ENCODE measurements at regions of chr7 and their contacts with region 1.

Region 1: GRCh38 chr7:23928418-23928775 is 218.4 kb downstream of the STK31 start:
- DNase-seq: no peak
- H3K4me3 ChIP-seq: no peak overlapping the region
- H3K27ac ChIP-seq: no peak overlapping the region
- H3K4me1 ChIP-seq: no peaks in the 10 kb centered on the region
- CTCF ChIP-seq: no peak

Region 2: GRCh38 chr7:23586159-23586558 is 342.2 kb before region 1 on chr7:
- CTCF ChIA-PET with region 1: no interaction called
- POLR2A ChIA-PET with region 1: no interaction called
- intact Hi-C with region 1: no loop called
- DNase-seq: no peak
- H3K4me3 ChIP-seq: no peak overlapping the region
- H3K27ac ChIP-seq: no peak overlapping the region
- H3K4me1 ChIP-seq: no peaks in the 10 kb centered on the region
- CTCF ChIP-seq: no peak

Region 3: DNA sequence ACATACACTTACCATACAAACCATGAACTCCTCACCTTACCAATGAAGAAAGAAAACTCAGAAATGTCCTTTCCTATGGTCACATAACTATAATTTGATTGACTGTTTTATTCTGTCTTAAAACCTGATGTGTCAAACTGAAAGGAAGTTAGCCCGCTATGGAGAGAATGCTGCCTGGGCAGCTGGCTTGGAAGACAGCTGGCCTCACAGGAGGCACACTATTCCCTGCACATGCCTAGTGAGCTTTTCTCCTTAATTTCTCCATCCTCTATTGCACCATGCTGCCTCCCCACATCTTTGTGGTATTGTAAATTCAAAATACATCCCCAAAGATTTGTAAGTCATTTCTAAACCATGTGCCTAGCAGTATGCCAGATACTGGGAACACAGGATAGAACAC is 55.1 kb before region 1 on chr7:
- CTCF ChIA-PET with region 1: no interaction called
- POLR2A ChIA-PET with region 1: no interaction called
- intact Hi-C with region 1: loop called (anchors 5 kb)
- DNase-seq: no peak
- H3K4me3 ChIP-seq: no peak overlapping the region
- H3K27ac ChIP-seq: no peak overlapping the region
- H3K4me1 ChIP-seq: no peaks in the 10 kb centered on the region
- CTCF ChIP-seq: no peak